ENCODE measurements at regions of chr6 and their contacts with region 1.

Region 1: GRCh38 chr6:159174263-159174969 is 5.2 kb downstream of the FNDC1 start:
- DNase-seq: peak; percentile 85
- ATAC-seq: peak; percentile 90

Region 2: GRCh38 chr6:159654483-159655098 is 480.2 kb after region 1 on chr6:
- intact Hi-C with region 1: loop called (anchors 10 kb)
- DNase-seq: no peak
- ATAC-seq: peak; percentile 26

Measured in left ventricle myocardium superior (tissue), 1 donor.